Calu3 (cell line): ENCODE measurements at regions of chr15 and their contacts with region 1.

Region 1: GRCh38 chr15:77496710-77497103 is 76.0 kb downstream of the HMG20A start:
- DNase-seq: peak; percentile 89
- H3K4me3 Mint-ChIP-seq: no peak overlapping the region
- H3K27ac Mint-ChIP-seq: no peak overlapping the region
- H3K4me1 Mint-ChIP-seq: peaks cover 36% of the 10 kb centered on the region
- H3K27me3 Mint-ChIP-seq: no peaks in the 10 kb centered on the region
- CTCF ChIP-seq: peak; percentile 88

Region 2: DNA sequence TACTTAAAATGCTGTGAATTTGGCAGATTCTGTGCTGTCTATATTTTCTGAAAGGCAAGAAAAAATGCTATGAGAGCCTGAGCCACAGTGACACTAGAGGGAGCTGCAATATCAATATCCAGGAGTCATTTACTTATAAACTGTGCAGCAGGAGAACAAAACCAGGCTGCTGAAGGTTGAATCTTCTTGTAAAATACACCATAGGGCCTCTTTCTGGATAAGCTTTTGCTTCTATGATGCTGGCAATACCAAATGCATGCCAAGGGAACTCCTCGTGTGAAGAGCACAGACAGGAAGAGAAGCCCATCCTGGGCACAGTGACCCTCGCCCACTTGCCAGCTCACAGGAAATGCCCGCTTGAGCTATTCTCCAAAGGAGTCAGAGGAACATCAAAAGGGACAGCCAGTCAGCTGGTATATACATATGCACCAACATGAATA is 377.8 kb before region 1 on chr15:
- CTCF ChIA-PET with region 1: interaction called, 10 read pairs
- intact Hi-C with region 1: loop called (anchors 2 kb)
- DNase-seq: peak; percentile 51
- H3K4me3 Mint-ChIP-seq: no peak overlapping the region
- H3K27ac Mint-ChIP-seq: no peak overlapping the region
- H3K4me1 Mint-ChIP-seq: peaks cover 19% of the 10 kb centered on the region
- H3K27me3 Mint-ChIP-seq: no peaks in the 10 kb centered on the region
- CTCF ChIP-seq: peak; percentile 71

Region 3: GRCh38 chr15:77186594-77187011 is 310.1 kb before region 1 on chr15:
- CTCF ChIA-PET with region 1: interaction called, 21 read pairs
- intact Hi-C with region 1: loop called (anchors 1 kb)
- DNase-seq: peak; percentile 18
- H3K4me3 Mint-ChIP-seq: no peak overlapping the region
- H3K27ac Mint-ChIP-seq: no peak overlapping the region
- H3K4me1 Mint-ChIP-seq: peaks cover 39% of the 10 kb centered on the region
- H3K27me3 Mint-ChIP-seq: no peaks in the 10 kb centered on the region
- CTCF ChIP-seq: no peak

Region 4: DNA sequence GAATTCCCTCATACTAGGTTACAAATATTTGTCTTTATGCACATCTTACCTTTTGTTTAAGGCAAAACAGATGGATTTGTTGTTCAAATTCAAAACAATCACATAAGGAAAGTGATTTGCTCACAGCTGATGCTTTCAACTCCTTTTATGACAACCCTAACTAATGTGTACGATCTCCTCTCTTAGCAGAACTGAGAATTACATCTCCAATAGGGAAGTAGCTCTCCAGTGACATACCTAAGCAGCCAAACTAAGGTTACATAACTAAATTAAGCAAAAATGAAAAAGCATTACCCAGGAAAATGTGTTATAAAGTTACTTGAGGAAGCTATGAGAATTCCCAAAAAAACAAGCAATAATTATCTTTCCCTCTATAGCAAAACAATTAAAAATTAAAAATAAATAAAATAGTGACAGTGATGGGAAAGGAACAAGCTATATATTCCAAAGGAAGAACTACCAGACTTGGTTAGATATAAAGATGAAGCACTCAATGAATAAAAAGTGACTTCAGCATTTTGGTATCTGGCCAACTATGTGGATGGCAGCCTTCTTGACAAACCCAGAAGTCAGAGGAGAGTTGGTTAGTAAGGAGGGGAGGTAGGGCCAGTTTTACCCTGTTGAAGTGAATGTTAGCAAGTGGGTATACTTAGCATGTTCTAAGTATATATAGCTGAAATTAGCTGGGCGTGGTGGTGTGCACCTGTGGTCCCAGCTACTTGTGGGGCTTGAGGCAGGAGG is 109.2 kb before region 1 on chr15:
- CTCF ChIA-PET with region 1: no interaction called
- intact Hi-C with region 1: no loop called
- DNase-seq: no peak
- H3K4me3 Mint-ChIP-seq: no peak overlapping the region
- H3K27ac Mint-ChIP-seq: no peak overlapping the region
- H3K4me1 Mint-ChIP-seq: no peaks in the 10 kb centered on the region
- H3K27me3 Mint-ChIP-seq: no peaks in the 10 kb centered on the region
- CTCF ChIP-seq: no peak

Region 5: DNA sequence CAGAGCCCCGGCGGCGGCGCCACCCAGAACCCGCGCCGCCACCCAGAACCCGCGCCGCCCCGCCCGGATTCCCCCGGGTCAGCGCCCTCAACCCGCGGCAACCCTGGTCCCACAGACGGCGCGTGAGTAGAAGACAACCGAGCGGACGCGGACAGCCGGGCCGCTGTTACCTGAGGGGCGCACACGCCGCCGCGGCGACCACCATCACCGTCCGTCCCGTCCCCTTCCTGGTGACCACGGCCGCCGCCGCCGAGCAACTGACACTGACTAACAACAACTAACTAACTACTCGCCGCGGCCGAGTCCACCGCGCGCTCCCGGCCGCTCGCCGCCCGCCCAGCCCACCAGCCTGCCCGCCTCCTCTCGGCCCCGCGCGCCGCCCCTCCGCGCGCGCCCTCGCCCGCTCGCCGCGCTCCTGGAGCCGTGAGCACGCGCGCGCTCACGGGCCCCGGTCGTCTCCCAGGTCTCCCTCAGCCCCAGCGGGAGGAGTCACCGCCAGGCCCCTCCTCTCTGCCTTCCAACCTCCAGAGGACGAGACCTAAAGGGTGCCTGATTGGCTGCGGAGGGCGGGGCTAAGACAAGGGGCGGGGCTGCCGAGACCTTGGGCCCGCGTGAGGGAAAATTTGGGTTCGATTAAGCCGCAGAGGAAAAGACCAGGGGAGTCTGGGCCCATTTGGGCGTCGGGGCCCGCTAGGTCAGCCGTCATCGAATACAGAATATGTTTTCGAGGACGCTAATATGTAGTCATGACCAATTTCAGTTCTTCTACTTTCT is 76.7 kb before region 1 on chr15 and contains the start of gene PEAK1:
- CTCF ChIA-PET with region 1: interaction called, 4 read pairs
- intact Hi-C with region 1: loop called (anchors 2 kb)
- DNase-seq: peak; percentile 100
- H3K4me3 Mint-ChIP-seq: peak within 1 kb of the TSS; percentile 85
- H3K27ac Mint-ChIP-seq: peak within 1 kb of the TSS; percentile 95
- H3K4me1 Mint-ChIP-seq: peaks cover 27% of the 10 kb centered on the region
- H3K27me3 Mint-ChIP-seq: no peaks in the 10 kb centered on the region
- CTCF ChIP-seq: no peak
- total RNA-seq, gene PEAK1: 51.7 and 54.3 TPM in 2 replicates

Region 6: DNA sequence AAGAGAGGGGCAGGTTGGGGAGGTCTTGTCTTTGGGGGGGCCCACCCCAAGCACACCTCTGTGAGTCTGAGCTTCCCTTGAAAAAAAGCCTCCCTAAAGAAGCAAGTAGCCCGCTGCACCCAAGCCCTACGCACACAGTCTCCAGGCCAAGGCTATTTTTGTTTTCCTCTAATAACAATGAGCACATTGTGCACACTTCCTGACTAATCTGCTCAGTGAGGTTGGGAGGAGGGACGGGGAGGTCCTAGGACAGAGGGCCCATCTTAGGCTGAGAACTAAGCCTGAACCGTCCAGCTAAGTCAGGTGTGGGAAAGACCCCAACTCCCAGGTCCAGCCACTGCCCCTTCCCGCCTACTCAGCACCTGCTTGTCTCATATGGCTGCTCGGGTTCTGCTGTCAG is 11.2 kb after region 1 on chr15:
- CTCF ChIA-PET with region 1: interaction called, 16 read pairs
- intact Hi-C with region 1: no loop called
- DNase-seq: peak; percentile 81
- H3K4me3 Mint-ChIP-seq: peak overlapping the region; percentile 61
- H3K27ac Mint-ChIP-seq: peak overlapping the region; percentile 99
- H3K4me1 Mint-ChIP-seq: peaks cover 56% of the 10 kb centered on the region
- H3K27me3 Mint-ChIP-seq: no peaks in the 10 kb centered on the region
- CTCF ChIP-seq: no peak